PC-3 (cell line): ENCODE measurements at regions of chr20 and their contacts with region 1.

Region 1: GRCh38 chr20:31485450-31486339 is 10.6 kb downstream of the REM1 start:
- DNase-seq: no peak
- ATAC-seq: no peak
- H3K4me3 ChIP-seq: no peak overlapping the region
- H3K27ac ChIP-seq: no peak overlapping the region
- H3K4me1 ChIP-seq: no peaks in the 10 kb centered on the region
- H3K27me3 ChIP-seq: peaks cover 60% of the 10 kb centered on the region
- CTCF ChIP-seq: no peak

Region 2: DNA sequence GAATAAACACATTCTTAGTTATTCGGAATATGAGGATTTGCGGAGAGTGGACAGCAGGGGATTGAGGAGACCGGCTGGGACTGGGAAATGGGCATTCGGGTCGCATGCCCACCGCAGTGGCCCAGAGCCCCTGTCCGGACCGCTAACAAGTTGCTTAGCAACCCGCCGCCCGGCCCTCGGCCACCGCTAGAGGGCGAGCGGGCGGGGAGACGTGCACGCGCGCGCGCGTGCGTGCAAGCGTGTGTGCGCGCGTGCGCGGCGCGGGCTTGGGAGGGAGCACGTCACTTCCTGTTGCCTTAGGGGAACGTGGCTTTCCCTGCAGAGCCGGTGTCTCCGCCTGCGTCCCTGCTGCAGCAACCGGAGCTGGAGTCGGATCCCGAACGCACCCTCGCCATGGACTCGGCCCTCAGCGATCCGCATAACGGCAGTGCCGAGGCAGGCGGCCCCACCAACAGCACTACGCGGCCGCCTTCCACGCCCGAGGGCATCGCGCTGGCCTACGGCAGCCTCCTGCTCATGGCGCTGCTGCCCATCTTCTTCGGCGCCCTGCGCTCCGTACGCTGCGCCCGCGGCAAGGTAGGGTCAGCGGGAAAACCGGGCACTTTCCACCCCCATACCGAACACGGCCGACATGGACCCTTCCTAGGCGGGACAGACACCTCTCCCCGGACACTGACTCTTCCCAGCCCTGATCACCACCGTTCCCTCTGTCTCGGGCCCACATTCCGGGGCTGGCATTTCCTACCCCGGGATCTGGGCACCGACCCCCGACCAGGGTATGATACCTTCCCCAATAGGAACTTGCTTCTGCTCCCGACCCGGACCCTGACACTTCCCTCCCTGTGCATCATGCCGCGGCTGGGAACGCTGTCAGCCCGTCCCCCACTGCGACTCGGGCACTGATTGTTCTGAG is 28.7 kb after region 1 on chr20 and contains the start of gene HM13:
- CTCF ChIA-PET with region 1: interaction called, 12 read pairs
- POLR2A ChIA-PET with region 1: no interaction called
- intact Hi-C with region 1: no loop called
- DNase-seq: peak; percentile 98
- ATAC-seq: peak; percentile 82
- H3K4me3 ChIP-seq: peak within 1 kb of the TSS; percentile 97
- H3K27ac ChIP-seq: peak within 1 kb of the TSS; percentile 52
- H3K4me1 ChIP-seq: peaks cover 24% of the 10 kb centered on the region
- H3K27me3 ChIP-seq: no peaks in the 10 kb centered on the region
- CTCF ChIP-seq: peak; percentile 94
- total RNA-seq, gene HM13: 99.5 and 125 TPM in 2 replicates

Region 3: GRCh38 chr20:31630187-31630790 is 144.6 kb after region 1 on chr20:
- CTCF ChIA-PET with region 1: no interaction called
- POLR2A ChIA-PET with region 1: no interaction called
- intact Hi-C with region 1: no loop called
- DNase-seq: no peak
- ATAC-seq: no peak
- H3K4me3 ChIP-seq: no peak overlapping the region
- H3K27ac ChIP-seq: no peak overlapping the region
- H3K4me1 ChIP-seq: no peaks in the 10 kb centered on the region
- H3K27me3 ChIP-seq: no peaks in the 10 kb centered on the region
- CTCF ChIP-seq: no peak